Activated T-helper 1 cell treated with anti-CD3 and anti-CD28 coated beads, Interleukin-12 subunit alpha, Interleukin-12 subunit beta, Interleukin-2, Interleukin-4 antibody, amounts not matched to agents 30 ng/mL and 10 ng/mL and 1 ng/mL, durations not matched to agents 14 hours and 24 hours and 36 hours (primary cell): ENCODE measurements at regions of chr15 and their contacts with region 1.

Region 1: DNA sequence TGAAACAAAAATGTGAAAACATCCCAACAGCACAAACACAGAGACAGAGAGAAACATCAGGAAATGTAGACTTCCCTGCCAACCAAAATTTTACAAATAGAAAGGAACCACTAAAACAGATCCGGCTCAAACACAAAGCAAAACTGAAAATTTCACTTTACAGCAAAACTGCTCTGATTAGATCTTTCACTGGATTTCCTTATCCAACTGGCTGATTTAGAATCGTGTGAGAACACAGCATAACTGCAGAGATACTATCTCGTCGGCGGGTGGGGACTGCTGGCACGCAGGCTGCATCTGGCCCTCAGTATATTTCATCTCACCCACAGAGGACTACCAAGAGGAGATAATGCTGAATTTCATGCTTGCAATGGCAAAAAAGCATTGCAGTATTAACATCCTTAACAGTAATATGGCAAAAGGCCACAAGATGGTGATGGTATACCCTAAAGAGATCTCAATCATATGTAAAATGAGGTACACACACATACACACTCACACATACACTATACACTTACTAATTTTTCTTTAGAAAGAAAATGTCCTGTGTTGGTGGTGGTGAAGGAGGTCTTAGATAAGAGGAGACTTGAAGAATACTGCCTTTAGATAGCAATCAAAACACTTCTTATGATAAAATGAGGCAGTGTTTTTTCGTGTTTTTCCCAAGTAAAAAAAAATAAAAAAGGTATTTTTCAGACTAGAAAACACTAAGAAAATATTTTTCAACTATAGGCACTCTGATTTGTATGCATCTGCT is 10.6 kb upstream of the LEO1 start:
- DNase-seq: peak; percentile 57
- H3K4me3 Mint-ChIP-seq: peak overlapping the region; percentile 76
- H3K27ac Mint-ChIP-seq: peak overlapping the region; percentile 87
- H3K4me1 Mint-ChIP-seq: peaks cover 13% of the 10 kb centered on the region
- H3K27me3 Mint-ChIP-seq: peaks cover 3% of the 10 kb centered on the region

Region 2: DNA sequence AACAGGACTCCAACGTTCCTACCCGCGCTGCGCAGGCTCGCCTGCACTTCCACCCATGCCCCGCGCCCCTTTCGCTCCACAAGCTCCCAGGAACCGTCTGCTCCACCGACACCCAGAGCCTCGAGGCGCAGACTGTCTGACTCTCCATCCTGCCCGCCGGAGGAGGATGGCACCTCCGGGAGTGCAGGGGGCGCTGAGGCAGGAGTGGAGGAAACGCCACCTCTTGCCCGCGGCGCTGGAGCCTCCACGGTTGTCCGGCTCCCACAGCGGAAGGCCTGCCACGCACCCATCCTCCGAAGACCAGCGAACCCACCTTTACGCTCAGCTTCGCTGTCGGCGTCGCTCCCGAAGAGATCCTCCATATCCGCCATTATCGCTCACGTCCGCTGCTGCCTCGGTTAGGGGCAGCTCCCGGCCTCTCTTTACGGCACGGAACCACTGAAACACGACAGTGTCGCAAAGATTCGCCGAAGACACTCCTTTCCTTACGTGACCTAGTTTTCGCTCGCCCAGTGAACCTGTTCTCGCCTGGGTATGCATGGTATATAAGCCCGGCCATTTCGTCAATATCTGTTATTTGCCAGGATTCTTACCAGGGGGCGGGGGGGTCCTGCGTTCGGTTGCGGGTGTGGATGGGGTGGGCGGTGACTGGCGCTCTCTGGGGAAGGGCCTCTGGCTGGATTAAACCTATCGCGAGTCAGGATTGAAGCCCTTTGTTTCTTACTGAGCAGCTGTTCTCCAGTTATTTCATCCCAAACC is 10.6 kb before region 1 on chr15 and contains the start of gene LEO1:
- intact Hi-C with region 1: loop called (anchors 1 kb)
- DNase-seq: peak; percentile 88
- H3K4me3 Mint-ChIP-seq: peak within 1 kb of the TSS; percentile 98
- H3K27ac Mint-ChIP-seq: peak within 1 kb of the TSS; percentile 92
- H3K4me1 Mint-ChIP-seq: peaks cover 22% of the 10 kb centered on the region
- H3K27me3 Mint-ChIP-seq: peaks cover 1% of the 10 kb centered on the region
- total RNA-seq, gene LEO1: 36.3 and 36.5 TPM in 2 replicates

Region 3: GRCh38 chr15:51992976-51993375 is 10.8 kb after region 1 on chr15:
- intact Hi-C with region 1: no loop called
- DNase-seq: no peak
- H3K4me3 Mint-ChIP-seq: no peak overlapping the region
- H3K27ac Mint-ChIP-seq: no peak overlapping the region
- H3K4me1 Mint-ChIP-seq: no peaks in the 10 kb centered on the region
- H3K27me3 Mint-ChIP-seq: no peaks in the 10 kb centered on the region

Region 4: DNA sequence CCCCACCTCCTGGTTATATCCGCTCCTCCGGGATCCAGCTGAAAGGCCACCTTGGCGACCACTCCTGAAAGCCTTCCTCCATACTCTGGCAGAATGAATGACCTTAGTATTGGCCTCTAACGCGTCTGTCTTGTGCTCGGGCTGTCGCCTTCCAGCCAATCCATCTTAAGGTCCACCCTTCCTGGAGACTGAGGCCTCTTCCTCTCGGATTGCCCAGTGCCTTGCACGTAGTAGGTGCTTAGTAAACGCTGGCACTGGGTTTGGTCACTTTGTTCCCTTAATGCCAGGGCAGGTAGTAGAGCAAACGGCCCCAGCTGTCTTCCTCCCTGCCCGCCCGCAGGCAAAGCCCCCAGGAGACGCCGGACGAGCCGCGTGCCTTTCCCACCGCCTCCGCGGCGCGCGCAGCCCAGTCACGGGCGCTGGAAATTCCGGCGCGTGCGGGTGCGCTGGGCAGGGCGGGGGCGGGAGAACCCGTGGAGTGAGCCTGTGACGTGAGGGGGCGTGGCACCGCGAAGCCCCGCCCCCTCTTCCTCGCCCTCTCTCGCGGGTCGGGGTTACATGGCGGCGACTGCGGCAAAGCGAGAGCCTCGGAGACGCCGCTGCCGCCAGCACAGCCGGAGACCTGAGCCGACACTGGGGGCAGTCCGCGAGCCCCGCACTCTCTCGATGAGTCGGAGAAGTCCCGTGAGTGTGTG is 36.6 kb after region 1 on chr15 and contains the start of gene MAPK6:
- intact Hi-C with region 1: loop called (anchors 1 kb)
- DNase-seq: peak; percentile 91
- H3K4me3 Mint-ChIP-seq: peak within 1 kb of the TSS; percentile 98
- H3K27ac Mint-ChIP-seq: peak within 1 kb of the TSS; percentile 99
- H3K4me1 Mint-ChIP-seq: peaks cover 46% of the 10 kb centered on the region
- H3K27me3 Mint-ChIP-seq: peaks cover 7% of the 10 kb centered on the region
- total RNA-seq, gene MAPK6: 57.3 and 57.9 TPM in 2 replicates

Region 5: GRCh38 chr15:52078876-52079700 is 96.9 kb after region 1 on chr15:
- intact Hi-C with region 1: loop called (anchors 1 kb)
- DNase-seq: peak; percentile 61
- H3K4me3 Mint-ChIP-seq: no peak overlapping the region
- H3K27ac Mint-ChIP-seq: no peak overlapping the region
- H3K4me1 Mint-ChIP-seq: peaks cover 38% of the 10 kb centered on the region
- H3K27me3 Mint-ChIP-seq: no peaks in the 10 kb centered on the region

Region 6: GRCh38 chr15:52171386-52171785 is 189.2 kb after region 1 on chr15:
- intact Hi-C with region 1: loop called (anchors 2 kb)
- DNase-seq: no peak
- H3K4me3 Mint-ChIP-seq: no peak overlapping the region
- H3K27ac Mint-ChIP-seq: no peak overlapping the region
- H3K4me1 Mint-ChIP-seq: peaks cover 6% of the 10 kb centered on the region
- H3K27me3 Mint-ChIP-seq: no peaks in the 10 kb centered on the region

Region 7: DNA sequence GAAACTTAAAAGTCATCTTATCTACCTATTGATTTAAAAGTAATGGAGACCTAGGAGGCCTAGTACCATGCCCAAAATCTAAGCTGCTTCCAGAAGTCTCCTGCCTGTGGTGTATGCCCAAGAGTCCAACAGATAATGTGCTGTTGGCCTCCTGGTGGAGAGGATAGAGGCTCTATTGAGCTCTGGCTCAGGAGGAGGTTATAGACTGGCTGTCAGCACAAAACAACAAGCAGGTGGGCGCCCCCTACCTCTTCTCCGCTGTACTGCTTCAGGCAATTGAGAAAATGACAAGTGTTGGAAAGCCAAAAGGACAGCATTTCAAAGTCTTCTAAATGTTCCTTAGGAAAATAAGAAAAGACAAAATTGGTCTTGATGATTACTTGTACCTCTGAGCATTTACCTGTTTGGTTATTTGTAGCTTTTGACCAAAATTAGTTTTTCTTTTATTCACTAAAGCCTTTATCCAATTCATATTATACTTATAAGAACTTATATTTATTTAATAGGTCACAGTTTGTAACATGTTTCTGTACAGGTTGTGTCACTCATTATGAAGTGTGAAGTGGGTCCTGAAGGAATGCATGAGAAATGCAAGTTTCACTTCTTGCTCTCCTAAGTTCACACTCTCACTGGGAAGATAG is 226.2 kb after region 1 on chr15:
- intact Hi-C with region 1: loop called (anchors 1 kb)
- DNase-seq: peak; percentile 65
- H3K4me3 Mint-ChIP-seq: no peak overlapping the region
- H3K27ac Mint-ChIP-seq: no peak overlapping the region
- H3K4me1 Mint-ChIP-seq: no peaks in the 10 kb centered on the region
- H3K27me3 Mint-ChIP-seq: peaks cover 4% of the 10 kb centered on the region